Activated CD8-positive, alpha-beta T cell treated with anti-CD3 and anti-CD28 coated beads, Interleukin-2, amount 10 ng/mL, durations not matched to agents 7 days and 5 days (primary cell): ENCODE measurements at regions of chr3 and their contacts with region 1.

Region 1: DNA sequence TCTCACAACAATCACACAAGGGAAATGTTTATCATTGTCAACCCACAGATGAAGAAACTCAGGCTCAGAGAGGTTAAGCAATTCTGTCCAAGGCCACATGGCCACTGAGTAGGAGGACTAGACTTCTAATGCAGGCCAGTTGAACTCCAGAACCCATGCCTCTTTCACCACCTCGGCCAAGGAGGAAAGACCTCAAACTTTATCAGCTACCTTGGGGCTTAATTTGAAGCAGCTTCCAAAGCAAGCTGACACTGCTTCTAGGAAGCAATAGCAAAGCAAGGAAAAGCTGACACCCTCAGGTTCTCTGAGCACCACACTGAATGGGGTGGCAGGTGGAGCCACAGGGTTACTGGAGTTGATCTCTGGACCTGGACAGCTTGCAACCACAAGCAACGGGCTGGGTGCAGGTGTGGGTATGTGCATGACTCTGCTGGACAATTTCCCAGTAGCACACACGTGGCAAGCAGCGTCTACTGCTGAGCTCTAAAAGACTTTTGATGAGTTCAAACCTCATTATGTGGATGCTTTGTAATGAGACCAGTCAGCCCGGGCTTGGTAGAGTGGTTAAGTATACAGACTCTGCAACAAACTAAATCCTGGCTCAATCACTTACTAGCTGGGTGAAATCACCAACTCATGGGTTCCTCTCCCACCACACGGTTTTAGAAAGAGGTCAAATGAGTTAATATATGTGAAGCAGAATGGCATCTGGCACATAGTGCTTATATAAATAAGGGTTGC is 23.1 kb downstream of the CCNL1 start:
- DNase-seq: no peak
- ATAC-seq: peak; percentile 3
- H3K4me3 Mint-ChIP-seq: no peak overlapping the region
- H3K27ac Mint-ChIP-seq: peak overlapping the region; percentile 64
- H3K4me1 Mint-ChIP-seq: peaks cover 59% of the 10 kb centered on the region
- H3K27me3 Mint-ChIP-seq: no peaks in the 10 kb centered on the region

Region 2: GRCh38 chr3:156542715-156543555 is 593.9 kb before region 1 on chr3:
- CTCF ChIA-PET with region 1: interaction called, 23 read pairs
- POLR2A ChIA-PET with region 1: no interaction called
- DNase-seq: no peak
- ATAC-seq: no peak
- H3K4me3 Mint-ChIP-seq: no peak overlapping the region
- H3K27ac Mint-ChIP-seq: peak overlapping the region; percentile 3
- H3K4me1 Mint-ChIP-seq: peaks cover 21% of the 10 kb centered on the region
- H3K27me3 Mint-ChIP-seq: no peaks in the 10 kb centered on the region

Region 3: DNA sequence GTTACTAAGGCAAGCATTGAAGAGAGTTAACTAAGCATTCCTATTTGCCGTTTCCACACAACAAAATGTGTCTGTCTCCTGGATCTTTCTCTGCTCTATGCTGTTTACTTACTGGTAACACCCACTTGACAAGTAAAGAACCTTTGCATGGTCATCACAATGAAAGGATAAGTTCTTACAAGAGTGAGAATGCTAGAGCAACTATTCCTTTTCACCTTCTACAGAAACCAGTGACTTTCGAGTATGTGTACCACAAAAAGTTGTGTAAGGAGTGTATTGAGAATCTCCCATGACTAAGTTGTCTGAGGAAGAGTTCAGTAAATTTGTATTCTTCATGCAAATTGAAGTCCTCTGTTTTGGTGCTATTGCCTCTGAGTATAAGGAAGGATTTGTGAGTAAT is 451.6 kb before region 1 on chr3:
- CTCF ChIA-PET with region 1: interaction called, 140 read pairs
- POLR2A ChIA-PET with region 1: no interaction called
- DNase-seq: no peak
- ATAC-seq: no peak
- H3K4me3 Mint-ChIP-seq: peak overlapping the region; percentile 9
- H3K27ac Mint-ChIP-seq: peak overlapping the region; percentile 50
- H3K4me1 Mint-ChIP-seq: peaks cover 85% of the 10 kb centered on the region
- H3K27me3 Mint-ChIP-seq: no peaks in the 10 kb centered on the region

Region 4: DNA sequence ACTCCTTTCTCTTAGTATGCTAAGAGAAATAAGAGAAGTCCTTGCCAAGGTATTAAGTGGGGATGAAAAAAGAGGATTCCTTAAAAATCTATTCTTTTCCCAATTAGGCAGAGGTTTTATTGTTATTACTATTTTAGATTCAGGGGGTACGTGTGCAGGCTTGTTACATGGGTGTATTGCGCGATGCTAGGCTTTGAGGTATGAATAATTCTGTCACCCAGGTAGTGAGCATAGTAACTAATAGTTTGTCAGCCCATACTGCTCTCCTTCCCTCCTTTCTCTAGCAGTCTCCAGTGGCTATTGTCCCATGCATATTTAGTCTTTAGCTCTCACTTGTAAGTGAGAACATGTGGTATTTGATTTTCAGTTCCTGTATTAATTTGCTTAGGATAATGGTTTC is 226.8 kb before region 1 on chr3:
- CTCF ChIA-PET with region 1: no interaction called
- POLR2A ChIA-PET with region 1: no interaction called
- DNase-seq: no peak
- ATAC-seq: no peak
- H3K4me3 Mint-ChIP-seq: no peak overlapping the region
- H3K27ac Mint-ChIP-seq: no peak overlapping the region
- H3K4me1 Mint-ChIP-seq: no peaks in the 10 kb centered on the region
- H3K27me3 Mint-ChIP-seq: peaks cover 10% of the 10 kb centered on the region

Region 5: DNA sequence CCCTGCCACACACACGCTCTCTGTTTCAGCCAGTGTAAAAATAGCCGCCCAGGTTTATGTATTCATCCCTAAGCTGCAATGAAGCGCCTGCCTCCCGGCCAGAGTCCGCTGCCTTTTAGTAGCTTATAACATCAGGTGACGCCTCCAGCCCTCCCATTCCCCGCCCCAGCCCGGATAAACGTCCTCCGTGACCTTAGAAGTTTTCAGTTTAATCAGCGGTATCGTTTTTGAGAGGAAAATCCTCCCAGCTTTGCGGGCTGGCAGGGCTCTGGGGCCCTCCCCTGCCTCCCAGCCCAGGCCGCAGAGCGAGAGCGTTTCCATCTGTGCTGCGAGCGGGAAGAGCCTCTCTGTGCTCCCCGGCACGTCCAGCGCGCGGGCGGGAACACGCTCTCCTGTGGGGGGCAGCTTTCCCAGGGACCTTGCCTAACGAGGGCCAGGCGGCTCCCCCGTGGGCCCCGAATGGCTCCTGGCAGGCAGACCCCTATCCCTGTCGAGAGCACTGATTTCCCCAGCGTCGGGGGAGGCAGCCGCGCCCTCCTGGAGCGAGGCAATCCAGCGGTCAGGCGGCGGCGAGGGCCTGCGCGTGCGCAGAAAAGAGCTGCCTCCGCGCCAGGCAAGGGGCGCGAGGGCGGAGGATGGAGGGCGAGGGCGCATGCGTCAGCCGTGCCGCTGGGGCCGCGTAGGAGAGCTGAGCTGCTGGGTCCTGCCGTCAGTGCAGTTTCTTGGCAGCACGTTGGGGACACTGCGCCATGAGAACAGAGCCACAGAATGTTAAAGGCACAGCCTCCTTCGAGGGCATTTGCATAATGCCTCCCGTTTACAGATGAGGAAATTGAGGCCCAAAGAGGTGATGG is 48.0 kb before region 1 on chr3:
- CTCF ChIA-PET with region 1: interaction called, 301 read pairs
- POLR2A ChIA-PET with region 1: interaction called, 69 read pairs
- DNase-seq: peak; percentile 95
- ATAC-seq: peak; percentile 96
- H3K4me3 Mint-ChIP-seq: peak overlapping the region; percentile 80
- H3K27ac Mint-ChIP-seq: peak overlapping the region; percentile 94
- H3K4me1 Mint-ChIP-seq: peaks cover 51% of the 10 kb centered on the region
- H3K27me3 Mint-ChIP-seq: no peaks in the 10 kb centered on the region

Region 6: DNA sequence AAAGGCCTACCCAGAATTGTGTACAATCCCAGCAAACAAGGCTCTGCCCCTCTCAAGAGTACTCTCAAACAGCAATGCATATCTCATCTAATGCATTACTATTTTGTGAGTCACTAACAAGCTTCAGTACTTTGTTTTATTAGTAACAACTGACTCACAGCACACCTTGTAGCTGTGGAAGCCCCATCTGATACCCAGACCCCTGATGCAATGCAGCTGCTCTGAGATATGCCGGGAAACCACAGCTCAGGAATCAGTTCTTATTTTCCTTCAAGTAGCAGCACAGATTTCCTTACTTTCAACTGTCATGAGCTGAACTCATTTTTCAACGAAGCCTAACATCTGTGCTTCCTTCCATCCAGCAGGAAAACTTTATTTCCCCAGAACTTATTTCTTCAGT is 14.7 kb before region 1 on chr3:
- CTCF ChIA-PET with region 1: interaction called, 21 read pairs
- POLR2A ChIA-PET with region 1: no interaction called
- DNase-seq: no peak
- ATAC-seq: no peak
- H3K4me3 Mint-ChIP-seq: no peak overlapping the region
- H3K27ac Mint-ChIP-seq: no peak overlapping the region
- H3K4me1 Mint-ChIP-seq: peaks cover 16% of the 10 kb centered on the region
- H3K27me3 Mint-ChIP-seq: no peaks in the 10 kb centered on the region

Region 7: GRCh38 chr3:157174649-157175498 is 38.1 kb after region 1 on chr3:
- CTCF ChIA-PET with region 1: interaction called, 11 read pairs
- POLR2A ChIA-PET with region 1: interaction called, 6 read pairs
- DNase-seq: peak; percentile 98
- ATAC-seq: peak; percentile 93
- H3K4me3 Mint-ChIP-seq: peak overlapping the region; percentile 96
- H3K27ac Mint-ChIP-seq: peak overlapping the region; percentile 98
- H3K4me1 Mint-ChIP-seq: peaks cover 30% of the 10 kb centered on the region
- H3K27me3 Mint-ChIP-seq: no peaks in the 10 kb centered on the region

Region 8: DNA sequence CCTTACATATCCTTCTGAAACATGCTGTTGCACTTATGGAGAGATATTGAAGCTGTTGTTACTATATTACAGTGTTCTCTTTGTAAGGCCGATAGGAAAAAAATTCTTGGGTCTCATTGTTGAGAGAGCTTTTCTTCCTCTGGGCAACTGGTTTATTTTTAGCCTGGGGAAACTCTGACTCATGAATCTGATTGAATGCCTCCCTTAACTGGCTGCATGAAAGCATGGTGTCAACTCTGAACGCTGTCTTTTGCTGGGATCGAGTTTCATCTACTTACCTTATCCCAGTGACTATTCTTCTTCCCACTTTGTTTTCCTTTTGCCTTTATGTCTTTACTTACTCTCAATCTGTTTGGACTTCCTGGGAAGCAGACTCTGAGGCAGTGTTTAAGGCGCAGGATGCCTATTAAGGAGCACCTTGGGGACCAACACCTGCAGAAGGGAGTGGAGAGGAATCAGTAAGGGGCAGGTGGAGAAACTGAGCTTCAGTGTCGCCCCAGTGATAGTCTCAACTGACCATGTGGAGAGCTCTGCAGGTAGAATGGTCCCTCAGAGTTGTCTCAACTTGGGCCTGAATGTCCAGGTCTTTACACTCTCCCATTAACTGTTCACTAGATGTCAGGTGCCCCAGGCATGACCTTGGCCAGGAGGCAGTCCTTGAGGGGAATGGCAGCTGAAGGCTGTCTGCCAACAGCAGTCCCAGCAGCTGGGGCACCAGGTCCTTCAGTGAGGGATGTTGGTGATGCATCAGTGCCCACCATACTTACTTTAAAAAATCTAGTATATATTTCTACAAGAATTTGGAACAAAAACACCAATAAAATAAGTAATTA is 112.0 kb after region 1 on chr3:
- CTCF ChIA-PET with region 1: no interaction called
- POLR2A ChIA-PET with region 1: no interaction called
- DNase-seq: no peak
- ATAC-seq: no peak
- H3K4me3 Mint-ChIP-seq: no peak overlapping the region
- H3K27ac Mint-ChIP-seq: no peak overlapping the region
- H3K4me1 Mint-ChIP-seq: peaks cover 3% of the 10 kb centered on the region
- H3K27me3 Mint-ChIP-seq: no peaks in the 10 kb centered on the region